Tibial artery (tissue), 4 donors: ENCODE measurements at regions of chr11 and their contacts with region 1.

Region 1: GRCh38 chr11:68383976-68384501 is 71.6 kb downstream of the LRP5 start:
- DNase-seq: peak; percentile 71 to 81
- H3K4me3 ChIP-seq: no peak overlapping the region
- H3K27ac ChIP-seq: peak overlapping the region; percentile 82 to 94
- H3K4me1 ChIP-seq: peaks cover 0 to 55% (median 49%) of the 10 kb centered on the region in 4 donors
- H3K27me3 ChIP-seq: no peaks in the 10 kb centered on the region
- CTCF ChIP-seq: peak; percentile 93 to 94

Region 2: GRCh38 chr11:68257475-68258362 is 126.3 kb before region 1 on chr11:
- intact Hi-C with region 1: loop called (anchors 1 kb)
- DNase-seq: peak; percentile 95 to 97
- H3K4me3 ChIP-seq: peak overlapping the region; percentile 2 to 19
- H3K27ac ChIP-seq: peak overlapping the region in 1 of 2 donors; percentile 46
- H3K4me1 ChIP-seq: peaks cover 0 to 17% (median 6%) of the 10 kb centered on the region in 4 donors
- H3K27me3 ChIP-seq: no peaks in the 10 kb centered on the region
- CTCF ChIP-seq: peak; percentile 88 to 97

Region 3: GRCh38 chr11:68312117-68312779 is 71.8 kb before region 1 on chr11 and contains the start of gene LRP5:
- intact Hi-C with region 1: loop called (anchors 5 kb)
- DNase-seq: no peak
- H3K4me3 ChIP-seq: peak within 1 kb of the TSS; percentile 79 to 82
- H3K27ac ChIP-seq: peak within 1 kb of the TSS; percentile 86 to 89
- H3K4me1 ChIP-seq: peaks cover 5 to 43% (median 33%) of the 10 kb centered on the region in 4 donors
- H3K27me3 ChIP-seq: no peaks in the 10 kb centered on the region
- CTCF ChIP-seq: no peak